ENCODE measurements at regions of chr19 and their contacts with region 1.

Region 1: DNA sequence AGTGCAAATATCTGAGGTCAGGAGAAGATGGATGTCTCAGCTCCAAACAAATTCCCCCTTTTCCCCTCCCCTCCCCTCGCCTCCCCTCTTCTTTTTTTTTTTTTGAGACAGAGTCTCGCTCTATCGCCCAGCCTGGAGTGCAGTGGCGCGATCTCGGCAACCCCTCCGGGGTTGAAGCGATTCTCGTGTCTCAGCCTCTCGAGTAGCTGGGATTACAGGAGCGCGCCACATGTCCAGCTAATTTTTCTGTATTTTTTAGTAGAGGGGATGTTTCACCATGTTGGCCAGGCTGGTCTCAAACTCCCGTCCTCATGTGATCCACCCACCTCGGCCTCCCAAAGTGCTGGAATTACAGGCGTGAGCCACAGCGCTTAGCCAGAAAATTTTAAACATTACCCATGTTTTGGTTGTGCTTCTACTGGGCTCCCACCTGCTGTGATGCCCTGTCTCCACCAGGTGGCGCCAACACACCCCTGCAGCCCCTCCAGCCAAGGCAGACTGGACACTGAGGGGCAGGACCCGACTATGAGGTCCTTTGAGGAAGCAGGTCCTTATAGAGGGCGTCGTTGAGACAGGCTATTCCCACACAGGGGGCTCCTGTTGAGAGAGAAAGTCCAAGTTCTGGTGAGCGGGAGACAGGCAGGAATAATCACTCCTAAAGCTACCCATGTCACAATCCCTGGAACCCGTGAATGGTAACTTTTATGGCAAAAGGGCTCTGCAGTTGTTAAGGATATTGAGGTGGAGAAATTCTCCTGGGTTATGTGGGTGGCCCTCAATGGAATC is 6.3 kb downstream of the ERICH4 start:
- H3K4me3 ChIP-seq: peak overlapping the region; percentile 13
- H3K27ac ChIP-seq: no peak overlapping the region; the same call in 1 of the 2 replicates
- H3K4me1 ChIP-seq: no peaks in the 10 kb centered on the region
- CTCF ChIP-seq: peak; percentile 99

Region 2: DNA sequence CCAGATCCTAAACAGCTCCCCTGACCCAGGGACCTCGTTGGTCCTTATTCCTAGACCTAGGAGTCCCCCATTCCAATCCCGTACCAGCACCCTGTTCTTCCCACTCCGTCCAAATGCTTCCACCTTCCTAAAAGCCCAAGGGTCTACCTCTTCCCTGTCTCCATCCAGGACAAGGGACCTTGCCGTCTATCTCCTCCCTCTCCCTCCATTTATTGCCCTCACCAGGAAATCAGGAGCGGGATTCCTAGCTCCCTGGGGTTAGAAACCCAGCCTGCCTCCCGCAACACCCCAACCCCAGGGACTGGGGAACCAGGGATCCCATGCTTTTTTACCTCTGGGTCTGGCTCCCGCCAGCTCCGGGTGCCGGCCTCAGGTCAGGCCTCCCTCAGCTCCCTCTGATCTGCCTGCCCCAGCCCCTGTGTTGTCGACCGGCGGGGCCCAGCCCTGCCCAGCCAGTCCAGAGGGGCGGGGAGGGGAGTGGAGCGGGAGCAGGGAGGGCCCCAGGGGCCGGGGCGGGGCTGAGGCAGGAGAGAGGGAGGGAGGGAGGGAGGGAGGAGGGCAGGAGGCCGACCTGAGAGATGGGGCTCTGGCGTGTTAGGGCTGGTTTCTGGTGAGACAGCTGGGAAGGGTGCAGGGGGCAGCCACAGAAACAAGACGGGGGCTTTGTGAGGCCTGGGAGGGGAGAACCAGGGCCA is 22.2 kb before region 1 on chr19 and contains the start of gene B3GNT8:
- CTCF ChIA-PET with region 1: interaction called, 21 read pairs
- POLR2A ChIA-PET with region 1: no interaction called
- H3K4me3 ChIP-seq: no peak within 1 kb of the TSS
- H3K27ac ChIP-seq: peak within 1 kb of the TSS; percentile 64
- H3K4me1 ChIP-seq: peaks cover 13% of the 10 kb centered on the region
- CTCF ChIP-seq: no peak

Region 3: DNA sequence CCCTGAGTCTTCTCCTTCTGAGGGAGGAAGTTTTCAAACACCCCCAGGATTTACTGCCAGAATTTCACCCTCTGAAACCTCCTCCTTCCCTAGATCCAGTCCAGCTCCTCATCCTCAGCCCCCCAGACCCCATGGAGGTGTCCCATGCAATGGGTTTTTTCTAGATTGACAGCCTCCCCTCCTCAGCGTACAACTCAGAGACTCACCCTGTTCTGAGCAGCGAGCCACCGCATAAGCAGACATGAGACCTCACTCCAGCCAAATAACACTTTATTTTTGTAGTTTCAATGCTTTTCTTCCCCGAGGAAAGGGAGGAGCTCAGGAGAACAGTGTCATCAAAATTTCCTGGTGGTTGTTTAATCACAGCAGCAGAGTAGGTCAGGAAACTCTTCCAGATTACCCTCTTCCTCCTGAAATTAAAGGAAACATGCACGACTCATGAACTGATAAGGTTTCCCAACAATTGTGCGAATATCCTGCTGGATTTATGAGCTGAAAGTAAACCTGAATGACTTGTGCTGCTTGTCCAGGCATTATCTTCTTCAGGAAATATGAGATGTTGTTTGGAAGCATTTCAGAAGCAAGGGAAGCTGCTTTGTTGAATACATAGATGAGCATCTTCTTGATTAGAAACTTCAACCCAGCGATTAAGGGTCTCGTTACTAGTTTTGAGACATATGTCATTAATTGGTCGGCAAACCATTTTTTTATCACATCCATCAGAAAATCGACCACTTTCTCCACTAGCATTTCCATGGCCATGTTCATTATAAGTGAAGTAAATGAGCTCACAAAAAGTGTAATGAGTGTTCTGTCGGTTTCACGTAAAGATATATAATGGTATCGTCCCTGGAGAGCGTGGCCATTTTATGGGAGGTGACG is 29.8 kb after region 1 on chr19:
- CTCF ChIA-PET with region 1: interaction called, 18 read pairs
- POLR2A ChIA-PET with region 1: no interaction called
- H3K4me3 ChIP-seq: no peak overlapping the region
- H3K27ac ChIP-seq: no peak overlapping the region
- H3K4me1 ChIP-seq: no peaks in the 10 kb centered on the region
- CTCF ChIP-seq: no peak

Region 4: GRCh38 chr19:41501854-41502253 is 52.6 kb after region 1 on chr19:
- CTCF ChIA-PET with region 1: interaction called, 18 read pairs
- POLR2A ChIA-PET with region 1: no interaction called
- H3K4me3 ChIP-seq: no peak overlapping the region
- H3K27ac ChIP-seq: peak overlapping the region; percentile 53
- H3K4me1 ChIP-seq: peaks cover 14% of the 10 kb centered on the region
- CTCF ChIP-seq: no peak

Region 5: GRCh38 chr19:41541990-41542584 is 92.8 kb after region 1 on chr19:
- CTCF ChIA-PET with region 1: interaction called, 38 read pairs
- POLR2A ChIA-PET with region 1: no interaction called
- H3K4me3 ChIP-seq: no peak overlapping the region
- H3K27ac ChIP-seq: no peak overlapping the region
- H3K4me1 ChIP-seq: no peaks in the 10 kb centered on the region
- CTCF ChIP-seq: 0 out of 2 replicates have a peak, but pooled peaks have one; percentile 25

Region 6: DNA sequence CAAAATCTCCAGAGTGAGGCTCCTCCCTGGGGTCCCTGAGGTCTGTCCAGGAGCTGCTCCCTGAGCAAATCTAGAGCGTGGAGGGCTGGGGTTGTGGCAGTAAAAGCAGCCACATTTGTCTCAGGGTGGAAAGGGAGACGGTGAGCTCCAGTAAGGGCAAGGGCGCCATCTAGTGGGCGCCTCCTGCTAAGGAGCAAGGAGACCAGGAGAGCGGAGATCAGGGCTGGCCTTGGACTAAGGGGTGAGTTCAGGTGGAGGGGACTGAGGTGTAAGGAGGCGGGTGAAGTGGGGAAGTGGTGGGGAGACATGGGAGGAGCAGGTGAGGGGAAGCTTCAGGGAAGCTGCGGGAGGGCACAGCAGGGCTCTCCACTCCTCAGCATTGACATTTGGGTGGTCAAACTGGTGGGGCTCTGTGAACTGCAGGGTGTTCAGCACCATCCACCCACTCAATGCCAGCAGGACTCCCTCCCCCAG is 121.4 kb after region 1 on chr19:
- CTCF ChIA-PET with region 1: interaction called, 433 read pairs
- POLR2A ChIA-PET with region 1: interaction called, 3 read pairs
- H3K4me3 ChIP-seq: no peak overlapping the region
- H3K27ac ChIP-seq: no peak overlapping the region
- H3K4me1 ChIP-seq: peaks cover 3% of the 10 kb centered on the region
- CTCF ChIP-seq: peak; percentile 99

Region 7: DNA sequence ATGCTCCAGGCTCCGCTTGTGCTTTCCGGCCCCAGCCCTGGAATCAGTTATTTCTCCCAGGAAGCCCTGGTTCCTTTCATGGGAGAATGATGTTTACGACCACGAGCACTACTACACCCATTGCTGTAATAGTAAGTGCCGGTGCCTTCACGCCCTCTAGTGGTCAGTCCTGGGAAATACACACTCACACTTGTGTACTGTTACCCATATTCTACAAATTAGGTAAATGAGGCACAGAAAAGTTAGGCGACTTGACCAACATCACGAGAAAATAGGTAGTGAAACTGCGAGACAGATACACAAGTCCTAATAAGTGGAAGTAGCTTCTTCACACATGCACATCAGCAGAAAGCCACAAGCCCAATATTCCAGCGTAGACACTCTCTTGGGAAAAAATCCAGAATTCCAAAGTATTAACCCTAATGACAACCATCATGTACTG is 148.3 kb after region 1 on chr19:
- CTCF ChIA-PET with region 1: interaction called, 45 read pairs
- POLR2A ChIA-PET with region 1: no interaction called
- H3K4me3 ChIP-seq: no peak overlapping the region
- H3K27ac ChIP-seq: no peak overlapping the region
- H3K4me1 ChIP-seq: peaks cover 10% of the 10 kb centered on the region
- CTCF ChIP-seq: peak; percentile 84